SK-N-SH (cell line): ENCODE measurements at regions of chr19 and their contacts with region 1.

Region 1: DNA sequence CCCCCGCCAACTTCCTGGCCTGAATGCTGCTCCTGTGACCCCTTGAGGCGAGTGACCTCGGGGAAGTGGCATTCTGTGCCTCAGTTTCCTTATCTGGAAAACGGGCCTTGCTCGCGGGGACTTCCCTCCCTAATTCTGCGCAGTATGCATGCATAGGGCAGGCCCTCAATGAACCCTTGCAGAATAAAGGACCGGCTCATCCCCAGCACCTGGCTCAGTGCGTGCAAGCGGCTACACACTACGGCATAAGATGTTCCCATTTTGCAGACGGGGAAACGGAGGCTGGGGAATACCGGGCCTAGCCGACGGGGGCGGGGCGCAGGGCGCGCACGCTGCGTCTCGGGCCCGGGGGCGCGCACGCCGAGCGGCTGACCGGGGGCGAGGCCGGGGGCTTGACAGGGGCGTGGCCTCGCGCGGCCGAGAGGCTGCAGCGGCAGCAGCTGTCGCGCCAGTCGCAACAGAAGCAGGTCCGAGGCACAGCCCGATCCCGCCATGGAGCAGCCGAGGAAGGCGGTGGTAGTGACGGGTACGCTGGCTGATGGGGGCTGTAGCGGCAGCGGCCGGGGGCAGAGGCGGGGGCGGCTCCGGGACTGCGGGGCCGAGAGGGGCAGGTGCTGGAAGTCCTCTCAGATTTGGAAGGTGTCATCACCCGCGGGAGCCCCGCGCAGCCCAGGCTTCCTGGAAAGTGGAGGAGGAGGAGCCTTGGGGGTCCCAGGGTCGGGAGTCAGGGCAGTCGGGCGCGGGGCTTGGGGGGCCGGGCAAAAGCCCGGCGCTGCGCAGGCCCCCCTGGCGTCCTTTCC is at the start of gene PGPEP1:
- DNase-seq: peak; percentile 96
- H3K4me3 ChIP-seq: peak within 1 kb of the TSS; percentile 59 to 90
- H3K27ac ChIP-seq: no peak within 1 kb of the TSS; a peak in 1 of 4 replicates
- H3K4me1 ChIP-seq: peaks cover 0 to 9% of the 10 kb centered on the region in 2 experiments; a peak in 1 of 4 replicates
- H3K27me3 ChIP-seq: no peaks in the 10 kb centered on the region
- CTCF ChIP-seq: no peak
- EP300 ChIP-seq: no peak
- RAD21 ChIP-seq: no peak
- polyA plus RNA-seq, gene PGPEP1: 13.8 and 13.9 TPM in 2 replicates

Region 2: DNA sequence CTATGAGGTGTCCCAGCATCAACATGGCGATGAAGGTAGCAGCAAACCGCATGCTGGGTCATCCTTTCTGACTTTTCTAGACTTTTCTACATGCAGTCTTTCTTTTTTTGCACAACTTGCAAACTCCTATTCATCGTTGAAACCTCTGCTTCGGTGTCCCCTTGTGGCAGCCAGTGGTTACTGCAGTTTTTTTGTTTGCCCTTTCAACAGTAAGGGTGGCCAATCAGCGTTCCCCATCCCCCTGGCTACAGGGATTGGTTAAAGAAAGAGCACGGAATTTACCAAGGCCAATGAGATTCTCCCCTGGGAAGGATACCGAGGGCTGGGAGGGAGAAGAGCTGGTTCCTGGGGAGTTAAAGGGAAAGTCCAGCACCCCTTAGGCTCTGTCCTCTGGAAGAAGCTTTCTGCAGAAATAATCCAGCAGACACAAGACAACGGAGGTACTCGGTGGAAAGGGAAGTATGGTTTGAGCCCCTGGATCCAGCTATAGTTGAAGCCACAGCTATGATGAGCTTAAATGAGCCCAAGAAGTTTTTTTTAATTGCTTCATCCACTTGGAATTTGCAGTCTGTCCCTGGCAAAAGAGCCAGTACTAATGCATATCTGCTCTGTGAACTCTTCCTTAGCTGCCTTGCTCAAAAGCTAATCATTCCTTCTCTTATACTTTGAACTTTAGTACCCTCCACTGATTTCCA is 11.9 kb before region 1 on chr19:
- CTCF ChIA-PET with region 1: interaction called, 23 read pairs
- POLR2A ChIA-PET with region 1: no interaction called
- DNase-seq: peak; percentile 94
- H3K4me3 ChIP-seq: peak overlapping the region; percentile 39 to 52
- H3K27ac ChIP-seq: peak overlapping the region; percentile 63 to 84
- H3K4me1 ChIP-seq: peaks cover 10 to 14% of the 10 kb centered on the region in 2 experiments; a peak in 2 of 4 replicates
- H3K27me3 ChIP-seq: no peaks in the 10 kb centered on the region
- CTCF ChIP-seq: peak; percentile 93
- EP300 ChIP-seq: peak in 1 of 2 experiments; percentile 53; a peak in 2 of 4 replicates
- RAD21 ChIP-seq: peak; percentile 90

Region 3: GRCh38 chr19:18397242-18398202 is 57.1 kb after region 1 on chr19 and contains the start of gene LRRC25:
- CTCF ChIA-PET with region 1: no interaction called
- POLR2A ChIA-PET with region 1: no interaction called
- DNase-seq: peak; percentile 63
- H3K4me3 ChIP-seq: no peak within 1 kb of the TSS
- H3K27ac ChIP-seq: no peak within 1 kb of the TSS
- H3K4me1 ChIP-seq: no peaks in the 10 kb centered on the region; a peak in 1 of 4 replicates
- H3K27me3 ChIP-seq: no peaks in the 10 kb centered on the region
- CTCF ChIP-seq: no peak
- EP300 ChIP-seq: no peak
- RAD21 ChIP-seq: no peak
- polyA plus RNA-seq, gene LRRC25: not detected in 2 replicates

Region 4: GRCh38 chr19:18419195-18419698 is 78.9 kb after region 1 on chr19 and contains the start of gene SSBP4:
- CTCF ChIA-PET with region 1: interaction called, 217 read pairs
- POLR2A ChIA-PET with region 1: no interaction called
- DNase-seq: peak; percentile 97
- H3K4me3 ChIP-seq: peak within 1 kb of the TSS; percentile 68 to 74
- H3K27ac ChIP-seq: peak within 1 kb of the TSS; percentile 89 to 93; a peak in 3 of 4 replicates
- H3K4me1 ChIP-seq: peaks cover 41 to 53% of the 10 kb centered on the region in 2 experiments; a peak in 3 of 4 replicates
- H3K27me3 ChIP-seq: no peaks in the 10 kb centered on the region
- CTCF ChIP-seq: peak; percentile 12; the same call in 1 of the 2 replicates
- EP300 ChIP-seq: peak; percentile 59 to 65; a peak in 2 of 4 replicates
- RAD21 ChIP-seq: no peak
- polyA plus RNA-seq, gene SSBP4: 22.5 and 24.9 TPM in 2 replicates